ENCODE measurements at regions of chr10 and their contacts with region 1.

Region 1: DNA sequence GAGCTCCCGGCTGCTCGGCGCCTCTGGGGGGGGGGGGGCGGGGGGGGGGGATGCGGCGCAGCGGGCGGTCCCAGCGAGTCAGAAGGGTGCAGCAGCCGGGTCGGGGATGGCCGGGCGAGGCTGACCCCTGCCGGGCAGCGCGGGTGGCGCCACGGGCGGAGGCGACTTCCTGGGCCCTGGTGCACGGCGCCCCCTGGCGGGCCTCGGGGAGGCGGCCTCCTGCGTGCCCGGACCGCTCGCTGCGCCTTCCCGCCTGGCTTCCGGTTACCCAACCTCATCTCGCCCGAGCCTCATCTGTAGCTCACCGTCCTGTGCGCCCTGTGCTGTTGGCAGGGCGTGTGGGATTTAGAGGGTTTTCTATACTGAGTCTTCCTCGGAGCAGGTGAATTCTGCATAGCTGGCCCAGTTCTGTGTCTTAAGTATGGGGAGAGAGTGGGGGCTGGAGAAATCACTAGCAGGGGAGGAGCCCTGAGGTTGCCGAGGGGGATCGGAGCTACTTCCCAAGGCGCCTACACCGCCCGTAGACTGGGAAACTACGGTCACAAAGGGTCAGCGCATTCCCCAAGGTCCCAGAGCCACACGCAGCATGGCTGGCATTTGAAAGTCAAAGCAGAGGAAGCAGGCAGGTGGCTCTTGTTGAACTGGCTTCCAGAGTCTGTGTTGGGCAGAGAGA is 28.3 kb upstream of the WDFY4 start:
- DNase-seq: peak; percentile 97
- ATAC-seq: peak; percentile 81
- H3K4me3 ChIP-seq: peak overlapping the region; percentile 75
- H3K27ac ChIP-seq: no peak overlapping the region
- H3K4me1 ChIP-seq: peaks cover 14% of the 10 kb centered on the region
- H3K27me3 ChIP-seq: no peaks in the 10 kb centered on the region; the same call in 1 of the 2 replicates
- CTCF ChIP-seq: peak; percentile 100

Region 2: GRCh38 chr10:48363617-48364355 is 292.6 kb before region 1 on chr10:
- CTCF ChIA-PET with region 1: interaction called, 23 read pairs
- POLR2A ChIA-PET with region 1: interaction called, 4 read pairs
- intact Hi-C with region 1: loop called (anchors 1 kb)
- DNase-seq: peak; percentile 86
- ATAC-seq: peak; percentile 71
- H3K4me3 ChIP-seq: no peak overlapping the region
- H3K27ac ChIP-seq: 0 out of 2 replicates have a peak overlapping the region, but pooled peaks have one; percentile 9
- H3K4me1 ChIP-seq: peaks cover 27% of the 10 kb centered on the region
- H3K27me3 ChIP-seq: peaks cover 28% of the 10 kb centered on the region
- CTCF ChIP-seq: peak; percentile 93

Region 3: GRCh38 chr10:48523820-48524758 is 132.3 kb before region 1 on chr10:
- CTCF ChIA-PET with region 1: interaction called, 16 read pairs
- POLR2A ChIA-PET with region 1: no interaction called
- intact Hi-C with region 1: no loop called
- DNase-seq: peak; percentile 37
- ATAC-seq: peak; percentile 58
- H3K4me3 ChIP-seq: peak overlapping the region; percentile 72
- H3K27ac ChIP-seq: no peak overlapping the region
- H3K4me1 ChIP-seq: peaks cover 4% of the 10 kb centered on the region; the same call in 1 of the 2 replicates
- H3K27me3 ChIP-seq: peaks cover 4% of the 10 kb centered on the region; the same call in 1 of the 2 replicates
- CTCF ChIP-seq: peak; percentile 87

Region 4: DNA sequence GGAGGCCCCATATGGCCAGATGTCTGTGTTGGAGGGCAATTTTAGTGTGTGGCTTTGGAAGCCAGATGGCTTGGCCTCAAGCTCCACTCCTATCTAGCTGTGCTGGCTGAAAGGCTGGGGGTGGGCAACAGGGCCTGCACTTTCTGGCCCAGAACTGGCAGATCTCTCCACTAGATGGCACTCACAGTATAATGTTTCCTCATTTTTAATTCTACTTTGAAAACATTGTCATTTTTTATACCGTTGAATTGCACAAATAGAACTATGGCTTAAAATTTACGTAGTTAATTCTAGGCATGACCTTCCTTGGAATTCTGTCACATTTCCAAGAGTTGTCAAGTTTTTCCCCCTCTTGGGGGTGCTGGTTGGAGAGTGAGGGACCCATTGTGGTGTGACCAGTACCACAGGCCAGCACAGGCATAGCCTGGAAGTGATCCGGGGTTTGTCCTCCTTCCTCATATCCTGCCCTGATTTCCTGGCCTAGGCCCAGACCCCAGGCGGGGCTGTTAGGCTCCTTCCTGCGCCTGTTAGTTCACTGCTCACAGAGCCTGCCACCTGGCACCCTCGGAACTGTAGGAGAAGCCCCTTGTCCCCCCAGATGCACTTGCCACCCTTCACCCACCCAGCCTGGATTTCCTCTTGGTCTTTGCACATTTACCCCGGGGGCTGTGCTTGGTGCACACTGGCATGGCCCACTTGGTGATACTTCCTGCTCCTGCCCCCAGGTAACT is 104.4 kb before region 1 on chr10:
- CTCF ChIA-PET with region 1: interaction called, 81 read pairs
- POLR2A ChIA-PET with region 1: no interaction called
- intact Hi-C with region 1: loop called (anchors 1 kb)
- DNase-seq: peak; percentile 81
- ATAC-seq: peak; percentile 74
- H3K4me3 ChIP-seq: no peak overlapping the region
- H3K27ac ChIP-seq: no peak overlapping the region
- H3K4me1 ChIP-seq: no peaks in the 10 kb centered on the region
- H3K27me3 ChIP-seq: no peaks in the 10 kb centered on the region
- CTCF ChIP-seq: peak; percentile 98

Region 5: GRCh38 chr10:48614481-48615390 is 41.6 kb before region 1 on chr10:
- CTCF ChIA-PET with region 1: interaction called, 10 read pairs
- POLR2A ChIA-PET with region 1: no interaction called
- intact Hi-C with region 1: loop called (anchors 2 kb)
- DNase-seq: peak; percentile 50
- ATAC-seq: peak; percentile 68
- H3K4me3 ChIP-seq: no peak overlapping the region
- H3K27ac ChIP-seq: no peak overlapping the region
- H3K4me1 ChIP-seq: no peaks in the 10 kb centered on the region; the same call in 1 of the 2 replicates
- H3K27me3 ChIP-seq: no peaks in the 10 kb centered on the region
- CTCF ChIP-seq: peak; percentile 75

Region 6: DNA sequence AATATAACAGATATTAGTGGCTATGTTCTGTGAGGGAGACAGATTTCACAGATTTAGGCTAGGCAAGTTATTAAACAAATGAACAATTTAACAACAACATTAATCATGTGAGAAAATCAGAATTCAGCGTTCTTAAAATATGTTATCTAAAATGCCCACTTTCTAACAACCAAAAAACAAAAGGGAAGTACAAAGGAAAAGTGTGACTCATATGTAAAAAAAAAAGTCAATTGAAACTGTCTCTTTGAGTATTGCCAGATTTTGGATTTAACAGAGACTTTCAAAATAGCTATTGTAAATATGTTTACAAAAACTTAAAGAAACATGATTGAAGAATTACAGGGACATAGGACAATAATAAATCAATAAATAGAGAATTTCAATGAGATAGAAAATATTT is 16.7 kb before region 1 on chr10:
- CTCF ChIA-PET with region 1: no interaction called
- POLR2A ChIA-PET with region 1: no interaction called
- intact Hi-C with region 1: no loop called
- DNase-seq: no peak
- ATAC-seq: no peak
- H3K4me3 ChIP-seq: no peak overlapping the region
- H3K27ac ChIP-seq: no peak overlapping the region
- H3K4me1 ChIP-seq: no peaks in the 10 kb centered on the region
- H3K27me3 ChIP-seq: no peaks in the 10 kb centered on the region
- CTCF ChIP-seq: no peak

Region 7: GRCh38 chr10:48701941-48702340 is 45.6 kb after region 1 on chr10:
- CTCF ChIA-PET with region 1: no interaction called
- POLR2A ChIA-PET with region 1: no interaction called
- intact Hi-C with region 1: no loop called
- DNase-seq: no peak
- ATAC-seq: no peak
- H3K4me3 ChIP-seq: no peak overlapping the region
- H3K27ac ChIP-seq: no peak overlapping the region
- H3K4me1 ChIP-seq: no peaks in the 10 kb centered on the region
- H3K27me3 ChIP-seq: peaks cover 98% of the 10 kb centered on the region
- CTCF ChIP-seq: no peak

Region 8: DNA sequence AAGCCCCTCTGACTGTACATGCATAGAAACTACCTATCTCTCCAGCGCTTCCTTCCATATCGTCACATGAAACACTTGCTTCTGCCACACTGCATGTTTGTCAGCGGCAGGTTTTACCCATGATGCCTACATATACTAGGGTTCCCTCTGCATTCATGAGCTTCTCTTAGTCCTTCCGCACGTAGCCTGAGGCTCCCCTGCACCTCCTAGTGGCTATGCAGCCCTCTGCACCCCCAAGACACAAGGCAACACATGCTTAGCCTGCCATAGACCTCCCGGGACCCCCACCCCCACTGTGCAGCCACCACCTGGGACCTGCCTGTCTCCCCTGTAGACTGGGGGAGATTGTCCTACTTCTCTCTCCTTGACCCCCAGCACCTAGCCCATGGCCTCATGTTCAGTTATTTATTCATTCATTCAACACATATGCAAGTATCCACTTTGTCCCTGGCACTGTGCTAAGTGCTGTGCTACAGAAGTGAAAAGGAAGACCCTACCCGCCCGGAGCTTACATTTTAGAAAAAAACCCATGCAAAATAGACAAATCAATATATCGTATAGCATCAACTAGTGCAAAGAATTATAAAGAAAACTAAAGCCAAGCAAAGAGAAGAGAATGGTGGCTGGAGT is 508.3 kb after region 1 on chr10:
- CTCF ChIA-PET with region 1: interaction called, 7 read pairs
- POLR2A ChIA-PET with region 1: no interaction called
- intact Hi-C with region 1: loop called (anchors 1 kb)
- DNase-seq: peak; percentile 60
- ATAC-seq: peak; percentile 50; the same call in 1 of the 2 replicates
- H3K4me3 ChIP-seq: no peak overlapping the region
- H3K27ac ChIP-seq: no peak overlapping the region
- H3K4me1 ChIP-seq: peaks cover 12% of the 10 kb centered on the region; the same call in 1 of the 2 replicates
- H3K27me3 ChIP-seq: peaks cover 8% of the 10 kb centered on the region; the same call in 1 of the 2 replicates
- CTCF ChIP-seq: peak; percentile 89

Region 9: DNA sequence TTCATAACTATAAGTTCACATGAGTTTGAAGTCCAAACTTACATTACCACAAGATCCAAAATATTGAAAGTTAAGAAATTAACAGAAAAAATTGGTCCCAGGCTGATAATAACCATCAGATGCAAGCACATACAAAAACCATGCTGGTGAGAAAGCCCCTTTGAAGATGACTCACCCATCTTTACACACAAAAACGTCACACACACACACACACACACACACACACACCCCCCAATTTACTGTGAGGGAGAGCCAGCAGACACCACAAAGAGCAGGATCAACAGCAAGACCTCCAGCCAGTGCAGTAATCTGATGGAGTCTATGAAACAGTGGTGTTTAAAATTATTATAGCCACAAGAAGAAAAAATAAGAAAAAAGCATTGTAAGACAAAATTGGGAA is 789.7 kb after region 1 on chr10:
- CTCF ChIA-PET with region 1: interaction called, 10 read pairs
- POLR2A ChIA-PET with region 1: no interaction called
- intact Hi-C with region 1: no loop called
- DNase-seq: peak; percentile 52
- ATAC-seq: peak; percentile 48
- H3K4me3 ChIP-seq: no peak overlapping the region
- H3K27ac ChIP-seq: no peak overlapping the region
- H3K4me1 ChIP-seq: no peaks in the 10 kb centered on the region
- H3K27me3 ChIP-seq: no peaks in the 10 kb centered on the region
- CTCF ChIP-seq: no peak

Region 10: GRCh38 chr10:49783645-49784044 is 1127.3 kb after region 1 on chr10:
- CTCF ChIA-PET with region 1: no interaction called
- POLR2A ChIA-PET with region 1: no interaction called
- intact Hi-C with region 1: no loop called
- DNase-seq: peak; percentile 53
- ATAC-seq: peak; percentile 49
- H3K4me3 ChIP-seq: no peak overlapping the region
- H3K27ac ChIP-seq: no peak overlapping the region
- H3K4me1 ChIP-seq: no peaks in the 10 kb centered on the region
- H3K27me3 ChIP-seq: peaks cover 50% of the 10 kb centered on the region
- CTCF ChIP-seq: peak; percentile 61

Measured in PC-3 (cell line).